AG04450 (cell line): ENCODE measurements at regions of chrX and their contacts with region 1.

Region 1: GRCh38 chrX:55451990-55452832 is at the start of gene MAGEH1:
- DNase-seq: peak; percentile 53
- H3K4me3 ChIP-seq: peak within 1 kb of the TSS; percentile 70
- H3K27ac ChIP-seq: peak within 1 kb of the TSS; percentile 89
- H3K27me3 ChIP-seq: no peaks in the 10 kb centered on the region
- CTCF ChIP-seq: no peak
- polyA plus RNA-seq, gene MAGEH1: 31.5 and 41.9 TPM in 2 replicates

Region 2: GRCh38 chrX:55488593-55489313 is 36.5 kb after region 1 on chrX:
- CTCF ChIA-PET with region 1: no interaction called
- POLR2A ChIA-PET with region 1: interaction called, 13 read pairs
- DNase-seq: no peak
- H3K4me3 ChIP-seq: peak overlapping the region; percentile 71
- H3K27ac ChIP-seq: peak overlapping the region; percentile 80
- H3K27me3 ChIP-seq: no peaks in the 10 kb centered on the region
- CTCF ChIP-seq: no peak